CD14-positive monocyte (primary cell): ENCODE measurements at regions of chr18 and their contacts with region 1.

Region 1: GRCh38 chr18:46173393-46174341 is 69.5 kb downstream of the HAUS1 start:
- DNase-seq: peak; percentile 83 to 90 (median 88)
- H3K4me3 ChIP-seq: peak overlapping the region; percentile 76 to 99 (median 99)
- H3K4me3 Mint-ChIP-seq: peak overlapping the region; percentile 98 to 99
- H3K27ac ChIP-seq: peak overlapping the region; percentile 81 to 95
- H3K27ac Mint-ChIP-seq: peak overlapping the region; percentile 90 to 99 (median 97)
- H3K4me1 ChIP-seq: peaks cover 18% of the 10 kb centered on the region in 2 donors
- H3K4me1 Mint-ChIP-seq: peaks cover 32% of the 10 kb centered on the region
- H3K27me3 ChIP-seq: no peaks in the 10 kb centered on the region
- H3K27me3 Mint-ChIP-seq: peaks cover 0 to 4% (median 1%) of the 10 kb centered on the region in 3 donors
- CTCF ChIP-seq: peak; percentile 96

Region 2: DNA sequence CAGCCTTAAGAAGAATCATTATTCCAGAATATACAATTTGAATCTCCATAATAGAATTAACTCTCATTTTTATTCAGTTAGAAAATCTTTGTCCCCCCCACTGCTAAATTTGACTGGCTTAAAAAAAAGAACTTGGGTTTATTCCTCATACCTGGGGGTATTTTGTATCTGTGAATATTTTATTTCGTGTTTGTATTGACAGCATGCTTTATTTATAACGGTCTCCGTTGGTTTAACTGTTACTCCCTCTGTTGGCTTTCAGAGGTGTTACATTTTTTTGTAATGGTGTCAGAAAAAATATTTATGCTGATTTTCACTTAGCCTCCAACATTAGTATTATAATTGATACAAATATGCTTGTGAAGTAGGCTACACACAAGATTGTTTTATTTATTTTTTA is 39.6 kb after region 1 on chr18:
- intact Hi-C with region 1: loop called in 1 of 2 experiments (anchors 5 kb)
- DNase-seq: peak in 2 of 3 donors; percentile 8 to 16
- H3K4me3 ChIP-seq: no peak overlapping the region
- H3K4me3 Mint-ChIP-seq: no peak overlapping the region
- H3K27ac ChIP-seq: no peak overlapping the region
- H3K27ac Mint-ChIP-seq: no peak overlapping the region
- H3K4me1 ChIP-seq: peaks cover 3 to 12% of the 10 kb centered on the region in 2 donors
- H3K4me1 Mint-ChIP-seq: peaks cover 32% of the 10 kb centered on the region
- H3K27me3 ChIP-seq: no peaks in the 10 kb centered on the region
- H3K27me3 Mint-ChIP-seq: no peaks in the 10 kb centered on the region
- CTCF ChIP-seq: peak; percentile 78